SK-N-SH (cell line): ENCODE measurements at regions of chr17 and their contacts with region 1.

Region 1: GRCh38 chr17:65231662-65232335 is 94.6 kb downstream of the RGS9 start:
- DNase-seq: peak; percentile 86
- H3K4me3 ChIP-seq: peak overlapping the region in 1 of 2 experiments; percentile 20; a peak in 1 of 4 replicates
- H3K27ac ChIP-seq: no peak overlapping the region
- H3K4me1 ChIP-seq: peaks cover 10 to 29% of the 10 kb centered on the region in 2 experiments; a peak in 3 of 4 replicates
- H3K27me3 ChIP-seq: no peaks in the 10 kb centered on the region
- CTCF ChIP-seq: peak; percentile 97
- EP300 ChIP-seq: no peak
- RAD21 ChIP-seq: peak; percentile 98

Region 2: GRCh38 chr17:65243802-65244220 is 12.0 kb after region 1 on chr17:
- CTCF ChIA-PET with region 1: interaction called, 36 read pairs
- POLR2A ChIA-PET with region 1: no interaction called
- DNase-seq: no peak
- H3K4me3 ChIP-seq: no peak overlapping the region
- H3K27ac ChIP-seq: no peak overlapping the region
- H3K4me1 ChIP-seq: peaks cover 0 to 4% of the 10 kb centered on the region in 2 experiments; a peak in 1 of 4 replicates
- H3K27me3 ChIP-seq: no peaks in the 10 kb centered on the region
- CTCF ChIP-seq: no peak
- EP300 ChIP-seq: no peak
- RAD21 ChIP-seq: no peak

Region 3: DNA sequence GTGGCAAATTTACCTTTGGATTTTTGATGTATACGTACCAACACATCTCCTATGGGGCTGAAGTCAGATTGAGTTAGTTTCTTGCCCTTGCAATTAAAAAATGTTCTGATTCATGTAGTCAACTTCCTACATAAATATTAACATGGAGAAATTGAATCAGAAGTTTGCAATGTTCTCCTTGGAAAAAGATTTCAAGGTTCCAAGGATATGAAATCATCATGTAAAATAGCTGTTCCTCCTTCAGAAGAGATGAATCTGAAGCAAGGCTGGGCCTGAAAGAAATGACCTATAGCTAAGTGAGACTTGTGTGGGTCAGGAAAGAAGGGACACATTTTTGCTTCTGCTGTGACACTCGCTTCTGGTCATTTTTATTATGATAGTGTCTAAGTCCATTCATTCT is 37.0 kb after region 1 on chr17:
- CTCF ChIA-PET with region 1: interaction called, 18 read pairs
- POLR2A ChIA-PET with region 1: no interaction called
- DNase-seq: no peak
- H3K4me3 ChIP-seq: no peak overlapping the region
- H3K27ac ChIP-seq: peak overlapping the region in 1 of 2 experiments; percentile 30; a peak in 2 of 4 replicates
- H3K4me1 ChIP-seq: no peaks in the 10 kb centered on the region
- H3K27me3 ChIP-seq: no peaks in the 10 kb centered on the region
- CTCF ChIP-seq: no peak
- EP300 ChIP-seq: no peak
- RAD21 ChIP-seq: no peak

Region 4: DNA sequence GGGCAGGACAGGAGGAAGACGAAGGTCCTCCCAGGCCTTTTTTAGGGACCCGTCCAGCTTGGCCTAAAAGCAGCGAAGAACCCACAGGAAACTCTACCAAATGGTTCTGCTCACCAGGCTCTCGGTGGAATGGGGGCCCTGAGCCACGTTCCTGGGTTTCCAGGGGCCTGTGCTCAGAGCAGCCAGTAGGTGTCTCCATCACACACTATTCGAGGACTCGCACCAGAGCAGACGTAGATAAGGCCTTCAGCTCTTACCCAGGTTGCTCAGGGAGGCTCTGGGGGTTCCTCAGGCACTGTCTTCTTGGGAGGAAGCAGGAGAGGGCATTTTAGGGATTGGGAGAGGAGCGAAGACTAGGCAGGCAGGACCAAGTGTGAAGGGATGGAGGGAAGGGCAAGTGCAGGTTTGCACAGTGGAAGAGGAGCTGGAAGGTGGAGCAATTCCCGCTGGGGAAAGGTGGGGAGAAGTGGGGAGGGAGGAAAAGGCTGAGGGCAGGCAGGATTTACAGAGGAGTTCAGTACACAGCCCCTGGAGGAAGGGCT is 62.5 kb after region 1 on chr17:
- CTCF ChIA-PET with region 1: interaction called, 34 read pairs
- POLR2A ChIA-PET with region 1: no interaction called
- DNase-seq: peak; percentile 87
- H3K4me3 ChIP-seq: no peak overlapping the region; a peak in 1 of 4 replicates
- H3K27ac ChIP-seq: no peak overlapping the region
- H3K4me1 ChIP-seq: peaks cover 0 to 2% of the 10 kb centered on the region in 2 experiments; a peak in 1 of 4 replicates
- H3K27me3 ChIP-seq: no peaks in the 10 kb centered on the region
- CTCF ChIP-seq: peak; percentile 93
- EP300 ChIP-seq: no peak
- RAD21 ChIP-seq: peak; percentile 98

Region 5: GRCh38 chr17:66165513-66166123 is 933.8 kb after region 1 on chr17:
- CTCF ChIA-PET with region 1: interaction called, 148 read pairs
- POLR2A ChIA-PET with region 1: no interaction called
- DNase-seq: peak; percentile 78
- H3K4me3 ChIP-seq: no peak overlapping the region; a peak in 1 of 4 replicates
- H3K27ac ChIP-seq: no peak overlapping the region; a peak in 1 of 4 replicates
- H3K4me1 ChIP-seq: no peaks in the 10 kb centered on the region
- H3K27me3 ChIP-seq: no peaks in the 10 kb centered on the region
- CTCF ChIP-seq: peak; percentile 98
- EP300 ChIP-seq: no peak
- RAD21 ChIP-seq: peak; percentile 99